Ascending aorta (tissue), 2 donors: ENCODE measurements at regions of chr19 and their contacts with region 1.

Region 1: DNA sequence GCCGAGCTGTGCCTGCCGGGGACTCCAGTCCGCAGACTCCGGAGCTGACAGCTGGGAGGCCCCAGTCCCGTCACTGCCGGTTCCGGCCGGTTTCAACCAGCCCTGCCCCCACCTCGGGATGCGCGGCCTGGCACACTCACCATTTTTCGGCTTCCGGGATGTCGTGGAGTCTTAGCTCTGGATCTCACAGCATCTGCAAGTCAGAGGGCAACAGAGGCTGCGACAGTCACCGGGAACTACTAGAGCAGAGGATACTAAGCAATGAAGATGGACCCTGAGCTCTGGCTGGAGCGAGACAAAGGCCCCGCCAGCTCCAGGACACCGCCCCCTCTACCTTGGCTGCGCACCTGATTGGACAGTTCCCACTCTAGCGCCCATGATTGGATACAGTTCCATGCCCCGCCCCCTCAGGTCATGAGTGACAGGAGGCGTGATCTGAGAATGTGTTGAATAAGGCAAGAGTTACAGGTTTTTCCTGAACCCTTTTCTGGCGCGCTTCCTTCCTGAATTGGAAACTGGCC is at the start of gene ZNF682:
- DNase-seq: peak; percentile 89 to 98
- H3K4me3 ChIP-seq: peak within 1 kb of the TSS; percentile 75 to 82
- H3K27ac ChIP-seq: peak within 1 kb of the TSS; percentile 45 to 51
- H3K4me1 ChIP-seq: peaks cover 0 to 6% of the 10 kb centered on the region in 2 donors
- H3K27me3 ChIP-seq: no peaks in the 10 kb centered on the region
- CTCF ChIP-seq: no peak
- total RNA-seq, gene ZNF682: 1.1 TPM

Region 2: GRCh38 chr19:19900729-19901444 is 138.4 kb before region 1 on chr19 and contains the start of gene ZNF93:
- intact Hi-C with region 1: loop called (anchors 2 kb)
- DNase-seq: peak; percentile 92 to 97
- H3K4me3 ChIP-seq: peak within 1 kb of the TSS; percentile 80 to 82
- H3K27ac ChIP-seq: peak within 1 kb of the TSS; percentile 68 to 77
- H3K4me1 ChIP-seq: peaks cover 0 to 2% of the 10 kb centered on the region in 2 donors
- H3K27me3 ChIP-seq: no peaks in the 10 kb centered on the region
- CTCF ChIP-seq: no peak
- total RNA-seq, gene ZNF93: 2.9 TPM

Region 3: DNA sequence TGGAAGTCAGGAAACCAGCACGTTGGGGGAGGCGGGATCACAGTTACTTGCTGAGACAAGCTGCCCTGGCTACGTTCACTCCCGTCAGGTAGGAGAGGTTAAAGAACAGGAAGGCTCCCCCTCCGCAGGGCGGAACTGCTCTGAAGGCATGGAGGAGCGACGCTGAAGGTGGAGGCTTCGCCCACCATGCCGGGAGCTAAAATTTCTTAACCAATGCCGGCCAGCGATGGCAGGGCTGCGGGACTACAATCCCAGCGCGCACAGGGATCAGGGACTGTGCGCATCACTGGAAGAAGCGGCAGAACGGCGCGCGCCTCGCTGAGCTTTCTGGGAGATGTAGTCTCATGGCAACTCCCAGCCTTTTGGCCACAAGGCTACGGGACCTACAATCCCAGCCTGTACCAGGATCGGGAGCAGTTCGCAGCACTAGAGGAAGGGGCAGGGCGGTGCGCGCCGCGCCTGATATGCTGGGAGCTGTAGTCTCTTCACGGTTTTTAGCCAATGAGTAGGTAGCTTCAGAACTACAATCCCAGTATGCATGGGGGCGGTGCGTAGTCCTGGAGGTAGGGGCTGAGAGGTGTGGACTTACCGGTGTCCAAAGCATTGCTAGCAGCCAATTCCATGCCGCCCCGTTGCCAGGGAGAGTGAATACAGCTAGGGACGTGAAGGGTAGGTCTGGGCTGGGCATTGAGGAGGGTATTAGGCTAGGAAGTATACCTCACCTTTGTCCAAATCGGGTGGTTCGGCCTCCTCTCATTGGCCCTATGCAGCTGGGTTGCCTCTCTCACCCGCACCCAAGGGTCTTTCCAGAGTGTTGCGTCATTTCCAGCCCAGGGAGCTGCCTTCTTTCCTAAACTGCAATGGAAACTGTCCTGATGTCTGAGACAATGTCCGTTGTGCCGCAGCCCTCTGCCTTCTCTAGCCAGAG is 12.8 kb after region 1 on chr19:
- intact Hi-C with region 1: loop called (anchors 1 kb)
- DNase-seq: peak; percentile 91 to 98
- H3K4me3 ChIP-seq: peak overlapping the region; percentile 74
- H3K27ac ChIP-seq: peak overlapping the region; percentile 75 to 76
- H3K4me1 ChIP-seq: no peaks in the 10 kb centered on the region
- H3K27me3 ChIP-seq: no peaks in the 10 kb centered on the region
- CTCF ChIP-seq: peak in 1 of 3 experiments; percentile 18

Region 4: DNA sequence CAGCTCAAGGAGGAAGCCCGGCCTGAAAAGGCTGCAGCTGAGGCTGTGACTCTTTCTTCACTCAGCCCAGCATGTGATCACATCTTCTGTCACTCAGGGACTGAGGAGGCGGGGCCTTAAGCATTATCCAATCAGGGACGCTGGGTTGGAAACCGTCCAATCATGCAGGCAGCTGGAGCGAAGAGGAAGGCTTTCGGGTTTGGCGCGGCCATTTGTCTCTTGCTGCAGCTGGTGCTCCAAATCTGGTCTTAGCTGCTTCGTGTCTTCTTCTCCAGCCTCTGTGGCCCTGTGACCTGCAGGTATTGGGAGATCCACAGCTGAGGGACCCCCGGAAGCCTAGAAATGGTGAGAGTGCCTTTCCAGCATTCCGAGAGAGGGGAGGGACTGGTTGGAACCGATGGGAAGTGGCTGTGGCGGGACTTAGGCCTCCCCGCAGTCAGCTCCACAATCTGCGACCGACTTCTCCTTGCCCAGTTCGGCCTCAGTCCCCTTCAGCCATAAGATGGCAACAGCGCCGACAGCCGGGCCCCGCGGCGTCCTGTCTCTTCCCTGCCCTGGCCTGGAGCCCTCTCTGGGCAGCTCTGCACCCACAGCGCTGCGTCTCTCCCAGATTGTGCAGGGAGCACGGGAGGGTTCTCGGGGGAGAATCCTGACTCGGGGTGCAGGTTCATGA is 38.7 kb after region 1 on chr19 and contains the start of gene ZNF90:
- intact Hi-C with region 1: loop called (anchors 1 kb)
- DNase-seq: peak; percentile 92 to 98
- H3K4me3 ChIP-seq: peak within 1 kb of the TSS; percentile 68 to 71
- H3K27ac ChIP-seq: peak within 1 kb of the TSS; percentile 6 to 54
- H3K4me1 ChIP-seq: peaks cover 0 to 3% of the 10 kb centered on the region in 2 donors
- H3K27me3 ChIP-seq: no peaks in the 10 kb centered on the region
- CTCF ChIP-seq: no peak
- total RNA-seq, gene ZNF90: not detected